RWPE1 (cell line): ENCODE measurements at regions of chr17 and their contacts with region 1.

Region 1: GRCh38 chr17:27293898-27294688 is at the start of gene WSB1:
- DNase-seq: peak; percentile 93
- H3K27ac ChIP-seq: peak within 1 kb of the TSS; percentile 95
- CTCF ChIP-seq: no peak

Region 2: GRCh38 chr17:27236717-27237315 is 57.3 kb before region 1 on chr17:
- CTCF ChIA-PET with region 1: interaction called, 10 read pairs
- POLR2A ChIA-PET with region 1: interaction called, 4 read pairs
- DNase-seq: peak; percentile 62
- H3K27ac ChIP-seq: no peak overlapping the region
- CTCF ChIP-seq: peak; percentile 85